CD8-positive, alpha-beta T cell (primary cell): ENCODE measurements at regions of chr19 and their contacts with region 1.

Region 1: GRCh38 chr19:36528194-36528920 is at the start of gene ZNF260:
- DNase-seq: peak; percentile 77 to 96 (median 92)
- ATAC-seq: peak; percentile 90
- H3K4me3 ChIP-seq: peak within 1 kb of the TSS; percentile 64 to 85
- H3K4me3 Mint-ChIP-seq: peak within 1 kb of the TSS; percentile 99
- H3K27ac ChIP-seq: peak within 1 kb of the TSS; percentile 52 to 84
- H3K27ac Mint-ChIP-seq: peak within 1 kb of the TSS; percentile 96
- H3K4me1 ChIP-seq: peaks cover 21% of the 10 kb centered on the region
- H3K4me1 Mint-ChIP-seq: peaks cover 28% of the 10 kb centered on the region
- H3K27me3 ChIP-seq: no peaks in the 10 kb centered on the region
- H3K27me3 Mint-ChIP-seq: no peaks in the 10 kb centered on the region
- CTCF ChIP-seq: no peak
- total RNA-seq, gene ZNF260: 2.8 to 4.6 TPM

Region 2: DNA sequence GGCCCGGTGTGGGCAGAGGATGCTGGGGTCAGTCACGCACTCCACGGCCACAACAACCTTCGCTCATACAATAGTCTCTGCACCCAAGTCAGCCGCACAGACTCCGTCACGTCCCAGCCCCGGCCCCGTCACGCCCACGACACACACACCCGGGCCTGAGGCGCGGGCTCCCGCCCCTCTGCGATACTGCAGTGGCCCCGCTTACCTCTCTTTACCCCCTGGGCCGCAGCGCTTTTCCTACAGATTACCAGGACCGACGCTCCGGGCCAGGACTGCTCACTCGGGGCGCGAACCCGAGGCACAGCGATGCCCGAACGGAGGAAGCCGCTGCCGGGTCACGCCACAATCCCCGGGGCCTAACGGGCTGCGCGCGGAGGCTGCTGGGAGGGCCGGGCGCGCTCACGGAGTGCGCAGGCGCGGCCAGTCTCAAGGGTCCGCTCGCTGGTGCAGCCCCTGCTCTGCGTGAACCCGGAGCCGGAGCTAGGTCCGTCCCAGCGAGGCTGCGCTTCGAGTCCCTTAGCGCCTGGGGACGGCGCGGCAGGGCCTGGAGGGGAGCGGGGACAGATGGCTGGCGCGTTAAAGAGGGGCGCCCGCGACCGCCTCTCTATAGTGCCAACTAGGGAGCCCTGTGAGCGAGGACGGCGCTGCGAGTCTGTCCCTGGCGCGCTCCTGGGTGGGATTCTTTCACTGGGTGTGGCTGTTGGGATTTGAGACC is 109.9 kb before region 1 on chr19 and contains the start of gene ZFP82:
- CTCF ChIA-PET with region 1: no interaction called
- POLR2A ChIA-PET with region 1: no interaction called
- intact Hi-C with region 1: loop called in 1 of 2 experiments (anchors 5 kb)
- DNase-seq: peak; percentile 56 to 87 (median 75)
- ATAC-seq: peak; percentile 88
- H3K4me3 ChIP-seq: peak within 1 kb of the TSS; percentile 95
- H3K4me3 Mint-ChIP-seq: peak within 1 kb of the TSS; percentile 90
- H3K27ac ChIP-seq: peak within 1 kb of the TSS; percentile 76 to 91
- H3K27ac Mint-ChIP-seq: peak within 1 kb of the TSS; percentile 93
- H3K4me1 ChIP-seq: peaks cover 19% of the 10 kb centered on the region
- H3K4me1 Mint-ChIP-seq: peaks cover 32% of the 10 kb centered on the region
- H3K27me3 ChIP-seq: peaks cover 0 to 10% of the 10 kb centered on the region in 2 experiments
- H3K27me3 Mint-ChIP-seq: peaks cover 14% of the 10 kb centered on the region
- CTCF ChIP-seq: no peak
- total RNA-seq, gene ZFP82: 5.3 to 5.6 TPM

Region 3: DNA sequence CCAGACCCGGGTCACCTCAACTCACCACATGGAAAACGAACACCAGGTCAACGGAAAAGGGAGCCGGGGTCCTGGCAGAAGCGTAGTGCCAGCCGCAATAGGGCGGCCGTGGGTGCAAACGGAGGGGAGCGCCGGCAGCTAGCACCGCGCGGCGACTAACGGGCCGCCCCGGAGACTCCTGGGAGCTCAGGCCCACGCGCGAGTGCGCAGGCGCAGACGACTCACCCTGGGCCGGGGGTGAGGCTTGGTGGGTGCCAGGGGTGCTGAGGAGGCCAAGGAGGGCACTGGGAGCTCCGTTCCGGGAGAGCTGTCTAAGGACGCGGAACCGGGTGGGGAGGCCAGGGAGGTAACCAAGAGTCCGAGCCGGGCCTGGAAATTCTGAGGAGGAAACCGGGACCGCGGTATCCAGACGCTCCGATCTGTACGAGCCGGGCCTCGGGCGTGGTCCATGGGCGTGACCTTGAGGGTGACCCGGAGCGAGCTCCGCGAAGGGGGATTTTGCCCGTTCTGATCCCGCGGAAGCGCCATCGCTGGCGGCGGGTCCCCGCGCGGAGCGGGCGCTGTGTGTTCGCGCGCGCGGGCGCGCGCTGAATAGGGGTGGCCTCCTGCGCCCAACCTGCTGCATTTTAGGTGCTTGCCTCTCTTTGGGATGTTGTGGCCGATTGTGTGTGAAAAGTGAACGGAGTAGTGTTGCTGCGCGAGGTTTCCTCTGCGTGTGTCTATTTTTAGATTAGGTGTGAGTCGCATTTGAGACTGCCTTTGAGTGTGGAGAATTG is 76.9 kb after region 1 on chr19 and contains the start of gene ZNF382:
- CTCF ChIA-PET with region 1: no interaction called
- POLR2A ChIA-PET with region 1: interaction called, 22 read pairs
- intact Hi-C with region 1: loop called (anchors 1 kb)
- DNase-seq: peak; percentile 72 to 91 (median 86)
- ATAC-seq: peak; percentile 65
- H3K4me3 ChIP-seq: peak within 1 kb of the TSS; percentile 89 to 95
- H3K4me3 Mint-ChIP-seq: peak within 1 kb of the TSS; percentile 91
- H3K27ac ChIP-seq: peak within 1 kb of the TSS; percentile 89 to 98
- H3K27ac Mint-ChIP-seq: peak within 1 kb of the TSS; percentile 97
- H3K4me1 ChIP-seq: peaks cover 11% of the 10 kb centered on the region
- H3K4me1 Mint-ChIP-seq: peaks cover 29% of the 10 kb centered on the region
- H3K27me3 ChIP-seq: no peaks in the 10 kb centered on the region
- H3K27me3 Mint-ChIP-seq: no peaks in the 10 kb centered on the region
- CTCF ChIP-seq: no peak
- total RNA-seq, gene ZNF382: 4.6 to 4.7 TPM